Natural killer cell (primary cell): ENCODE measurements at regions of chr16 and their contacts with region 1.

Region 1: DNA sequence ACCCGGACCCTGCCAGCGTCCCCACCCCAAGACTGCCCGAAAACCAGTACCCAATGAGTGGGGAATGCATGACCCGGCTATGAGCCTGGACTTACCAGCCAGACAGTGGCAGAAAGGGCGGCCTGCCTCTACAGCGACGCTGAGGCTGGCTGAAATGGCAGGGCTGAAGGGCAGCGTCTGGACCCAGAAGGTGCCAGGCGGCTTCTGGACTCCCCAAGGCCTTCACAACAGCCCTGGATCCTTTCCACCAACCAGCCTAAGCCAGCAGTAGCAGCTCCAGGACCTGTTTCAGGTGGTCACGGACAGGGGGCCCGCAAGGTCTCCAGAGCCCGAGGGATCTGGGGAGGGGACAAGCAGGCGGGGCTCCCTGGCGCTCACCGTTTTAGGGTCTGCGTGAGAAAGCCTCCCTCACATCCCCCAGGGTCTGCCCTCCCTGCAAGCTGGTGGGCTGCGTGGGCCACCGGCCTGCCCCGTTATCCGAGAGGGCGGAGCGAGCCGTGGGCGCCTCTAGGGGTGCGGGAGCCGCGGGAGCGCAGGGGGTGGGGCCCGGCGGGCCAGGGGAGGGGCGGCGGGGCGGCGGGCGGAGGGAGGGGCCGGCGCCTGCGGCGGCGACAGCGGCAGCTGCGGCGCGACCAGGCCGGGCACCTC is at the start of gene RIPOR1:
- DNase-seq: peak; percentile 32 to 69
- ATAC-seq: peak; percentile 36 to 59 (median 56)
- H3K4me3 ChIP-seq: peak within 1 kb of the TSS; percentile 50
- H3K4me3 Mint-ChIP-seq: peak within 1 kb of the TSS; percentile 91
- H3K27ac ChIP-seq: peak within 1 kb of the TSS; percentile 84
- H3K27ac Mint-ChIP-seq: peak within 1 kb of the TSS; percentile 70 to 92
- H3K4me1 ChIP-seq: peaks cover 41% of the 10 kb centered on the region
- H3K4me1 Mint-ChIP-seq: peaks cover 19 to 30% of the 10 kb centered on the region in 2 donors
- H3K27me3 ChIP-seq: no peaks in the 10 kb centered on the region
- H3K27me3 Mint-ChIP-seq: peaks cover 0 to 15% of the 10 kb centered on the region in 2 donors
- CTCF ChIP-seq: no peak
- total RNA-seq, gene RIPOR1: 68.2 to 118 (median 74.8) TPM

Region 2: DNA sequence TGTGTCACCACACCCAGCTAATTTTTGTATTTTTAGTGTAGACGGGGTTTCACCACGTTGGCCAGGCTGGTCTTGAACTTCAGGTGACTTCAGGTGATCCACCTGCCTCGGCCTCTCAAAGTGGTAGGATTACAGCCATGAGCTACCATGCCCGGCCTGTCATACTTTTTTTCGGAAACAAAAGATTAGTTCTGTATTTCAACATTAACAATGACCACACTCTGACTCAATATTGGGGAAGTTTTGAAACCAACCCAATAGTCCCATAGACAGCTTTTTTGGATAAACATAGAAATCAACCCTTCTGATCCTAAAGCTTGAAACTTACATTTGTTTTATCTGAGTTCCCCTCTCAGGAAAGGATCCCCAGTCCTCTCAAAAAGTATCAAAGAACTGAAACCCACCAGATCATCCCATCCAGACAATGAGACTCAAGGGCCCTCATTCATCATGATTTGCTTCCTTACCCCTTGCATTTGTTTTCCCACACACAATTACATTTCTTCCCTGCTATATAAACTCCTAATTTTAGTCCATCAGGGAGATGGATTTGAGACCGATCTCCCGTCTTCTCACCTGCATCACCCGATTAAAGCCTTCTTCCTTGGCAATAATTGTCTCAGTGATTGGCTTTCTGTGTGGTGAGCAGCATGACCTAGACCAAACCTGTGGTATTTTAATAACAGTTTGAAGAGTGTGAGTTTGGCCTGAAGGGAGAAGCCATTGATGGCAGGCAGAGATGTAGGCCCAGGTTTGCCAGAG is 37.8 kb before region 1 on chr16:
- intact Hi-C with region 1: loop called (anchors 5 kb)
- DNase-seq: no peak
- ATAC-seq: no peak
- H3K4me3 ChIP-seq: no peak overlapping the region
- H3K4me3 Mint-ChIP-seq: no peak overlapping the region
- H3K27ac ChIP-seq: peak overlapping the region; percentile 59
- H3K27ac Mint-ChIP-seq: peak overlapping the region; percentile 15 to 58
- H3K4me1 ChIP-seq: peaks cover 40% of the 10 kb centered on the region
- H3K4me1 Mint-ChIP-seq: peaks cover 9 to 11% of the 10 kb centered on the region in 2 donors
- H3K27me3 ChIP-seq: no peaks in the 10 kb centered on the region
- H3K27me3 Mint-ChIP-seq: no peaks in the 10 kb centered on the region
- CTCF ChIP-seq: no peak